GM23248 (cell line): ENCODE measurements at regions of chr12 and their contacts with region 1.

Region 1: GRCh38 chr12:11581179-11581755 is 68.2 kb upstream of the ETV6 start:
- DNase-seq: peak; percentile 82
- H3K4me3 ChIP-seq: no peak overlapping the region
- H3K27ac ChIP-seq: no peak overlapping the region
- H3K4me1 ChIP-seq: peaks cover 36% of the 10 kb centered on the region
- H3K27me3 ChIP-seq: no peaks in the 10 kb centered on the region

Region 2: GRCh38 chr12:11695321-11695720 is 114.1 kb after region 1 on chr12:
- in situ Hi-C with region 1: no loop called
- DNase-seq: peak; percentile 88
- H3K4me3 ChIP-seq: no peak overlapping the region
- H3K27ac ChIP-seq: peak overlapping the region; percentile 61
- H3K4me1 ChIP-seq: peaks cover 33% of the 10 kb centered on the region
- H3K27me3 ChIP-seq: no peaks in the 10 kb centered on the region

Region 3: DNA sequence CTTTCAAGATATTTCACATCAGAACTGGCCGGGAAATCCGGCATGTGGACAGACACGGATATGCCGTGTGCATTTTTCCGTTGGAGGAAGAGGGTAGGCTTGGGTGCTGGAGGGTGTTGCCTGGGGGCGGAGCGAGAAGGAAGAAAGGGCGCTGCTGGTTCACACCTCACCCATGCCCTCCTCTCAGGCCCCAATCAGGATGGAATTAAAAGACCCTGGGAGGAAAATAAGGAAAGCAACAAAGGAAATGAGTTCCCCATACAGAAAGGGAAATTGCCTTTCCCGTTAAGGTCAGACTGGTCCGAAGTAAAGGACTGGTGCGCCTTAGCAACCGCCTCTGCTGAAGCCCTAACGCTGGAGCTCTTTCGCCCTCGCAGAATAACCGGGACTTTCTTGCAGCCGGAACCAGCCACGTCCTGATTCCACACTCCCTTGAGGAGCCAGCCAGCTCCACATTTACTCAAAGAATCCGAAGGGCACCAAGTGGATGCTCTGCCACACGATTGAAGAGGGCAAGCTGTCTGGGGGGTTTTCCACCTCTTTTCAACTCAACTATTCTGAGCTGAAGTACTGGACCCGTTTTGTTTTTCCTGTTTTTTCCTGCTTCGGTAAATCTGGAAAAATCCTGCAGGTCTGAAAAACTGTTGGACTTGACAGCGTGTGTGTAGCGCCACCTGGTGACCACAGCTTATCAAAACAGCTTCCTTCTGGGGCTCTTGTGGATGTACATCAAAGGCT is 451.8 kb after region 1 on chr12:
- in situ Hi-C with region 1: loop called (anchors 10 kb)
- DNase-seq: peak; percentile 83
- H3K4me3 ChIP-seq: peak overlapping the region; percentile 71
- H3K27ac ChIP-seq: peak overlapping the region; percentile 8; the same call in 1 of the 2 replicates
- H3K4me1 ChIP-seq: no peaks in the 10 kb centered on the region
- H3K27me3 ChIP-seq: no peaks in the 10 kb centered on the region

Region 4: GRCh38 chr12:12327802-12328201 is 746.5 kb after region 1 on chr12:
- in situ Hi-C with region 1: loop called (anchors 10 kb)
- DNase-seq: peak; percentile 83
- H3K4me3 ChIP-seq: no peak overlapping the region
- H3K27ac ChIP-seq: no peak overlapping the region
- H3K4me1 ChIP-seq: no peaks in the 10 kb centered on the region
- H3K27me3 ChIP-seq: no peaks in the 10 kb centered on the region

Region 5: GRCh38 chr12:12724661-12725545 is 1143.6 kb after region 1 on chr12:
- in situ Hi-C with region 1: loop called (anchors 25 kb)
- DNase-seq: peak; percentile 99
- H3K4me3 ChIP-seq: peak overlapping the region; percentile 90
- H3K27ac ChIP-seq: peak overlapping the region; percentile 94
- H3K4me1 ChIP-seq: peaks cover 34% of the 10 kb centered on the region
- H3K27me3 ChIP-seq: no peaks in the 10 kb centered on the region